ENCODE measurements at regions of chr6 and their contacts with region 1.

Region 1: GRCh38 chr6:151765444-151765886 is 42.0 kb upstream of the ESR1 start:
- DNase-seq: peak in 1 of 2 donors; percentile 70
- ATAC-seq: peak; percentile 30 to 73 (median 48)
- H3K4me3 ChIP-seq: no peak overlapping the region
- H3K27ac ChIP-seq: no peak overlapping the region
- H3K4me1 ChIP-seq: peaks cover 0 to 22% (median 8%) of the 10 kb centered on the region in 9 donors
- H3K27me3 ChIP-seq: no peaks in the 10 kb centered on the region
- CTCF ChIP-seq: peak; percentile 57 to 85 (median 75)

Region 2: DNA sequence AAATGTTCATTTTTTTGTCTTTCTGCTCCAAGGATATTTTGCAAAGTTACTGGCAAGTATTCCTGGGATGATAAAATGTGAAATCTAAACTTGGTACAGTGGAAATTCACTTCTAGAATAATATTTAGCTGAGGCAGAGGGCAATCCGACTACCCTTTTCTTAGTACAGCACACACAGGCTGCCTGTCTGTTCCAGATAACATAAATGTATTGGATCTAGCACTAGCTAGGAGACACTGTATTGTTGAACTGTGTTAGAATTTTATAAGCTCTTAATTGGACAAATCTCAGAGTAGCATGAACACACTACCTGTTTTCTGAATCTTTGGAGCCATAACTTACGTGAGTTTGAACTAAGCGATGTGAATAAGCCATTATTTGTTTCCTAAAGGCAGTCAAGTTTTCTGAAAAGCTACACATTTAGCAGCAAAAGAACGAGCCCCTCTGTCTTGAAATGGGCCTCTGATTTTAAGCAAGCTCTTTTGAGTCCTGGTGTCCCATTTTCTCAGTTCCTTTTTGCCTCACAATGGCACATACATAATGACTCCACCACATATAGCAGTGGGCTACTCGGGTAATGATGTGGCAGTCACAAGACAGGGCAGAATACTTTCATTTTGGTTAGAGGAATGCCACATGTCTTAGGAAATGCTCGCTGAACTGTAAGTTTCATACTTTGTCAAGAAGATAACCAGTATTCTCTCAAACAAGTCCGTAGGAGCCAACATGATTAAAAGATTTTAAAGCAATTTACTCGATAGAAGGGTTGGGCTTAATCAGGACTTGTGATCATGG is 74.5 kb before region 1 on chr6:
- intact Hi-C with region 1: loop called in 1 of 10 experiments (anchors 2 kb)
- DNase-seq: no peak
- ATAC-seq: peak in 7 of 8 donors; percentile 64 to 78 (median 72)
- H3K4me3 ChIP-seq: peak overlapping the region in 9 of 10 donors; percentile 10 to 47 (median 41)
- H3K27ac ChIP-seq: peak overlapping the region; percentile 18 to 82 (median 69)
- H3K4me1 ChIP-seq: peaks cover 0 to 27% (median 0%) of the 10 kb centered on the region in 9 donors
- H3K27me3 ChIP-seq: peaks cover 0 to 2% (median 0%) of the 10 kb centered on the region in 7 donors
- CTCF ChIP-seq: no peak

Region 3: GRCh38 chr6:151807533-151808370 is 42.3 kb after region 1 on chr6 and contains the start of gene ESR1:
- intact Hi-C with region 1: no loop called
- DNase-seq: peak in 1 of 2 donors; percentile 19
- ATAC-seq: peak in 7 of 8 donors; percentile 15 to 53 (median 31)
- H3K4me3 ChIP-seq: peak within 1 kb of the TSS; percentile 16 to 56 (median 47)
- H3K27ac ChIP-seq: no peak within 1 kb of the TSS
- H3K4me1 ChIP-seq: peaks cover 0 to 41% (median 31%) of the 10 kb centered on the region in 9 donors
- H3K27me3 ChIP-seq: peaks cover 0 to 59% (median 33%) of the 10 kb centered on the region in 7 donors
- CTCF ChIP-seq: no peak
- total RNA-seq, gene ESR1: 0.68 to 1.9 (median 1.3) TPM

Region 4: GRCh38 chr6:152110886-152111820 is 345.7 kb after region 1 on chr6:
- intact Hi-C with region 1: loop called in 1 of 10 experiments (anchors 5 kb)
- DNase-seq: peak; percentile 66 to 72
- ATAC-seq: peak; percentile 83 to 97 (median 94)
- H3K4me3 ChIP-seq: no peak overlapping the region
- H3K27ac ChIP-seq: peak overlapping the region; percentile 51 to 81 (median 72)
- H3K4me1 ChIP-seq: peaks cover 7 to 30% (median 25%) of the 10 kb centered on the region in 9 donors
- H3K27me3 ChIP-seq: no peaks in the 10 kb centered on the region
- CTCF ChIP-seq: peak in 2 of 9 donors; percentile 10 to 12

Region 5: DNA sequence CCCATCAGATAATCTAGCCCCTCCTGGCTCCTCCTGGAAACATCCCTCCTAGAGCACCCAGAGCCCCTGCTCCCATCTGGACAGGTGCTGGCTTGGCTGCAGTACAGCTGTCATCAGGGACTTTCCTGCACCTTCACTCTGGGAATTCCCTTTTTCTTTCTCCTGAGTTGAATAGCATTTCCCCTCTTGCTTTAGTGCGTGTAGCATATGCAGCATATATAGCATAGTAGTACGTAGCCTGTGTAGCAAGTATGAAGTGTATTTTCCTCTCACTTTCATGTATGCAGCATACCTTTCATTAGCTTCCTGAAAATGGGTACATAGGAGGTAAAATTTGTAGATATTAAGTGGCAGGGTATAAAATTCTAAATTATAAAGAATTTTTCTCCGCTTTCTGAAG is 394.9 kb after region 1 on chr6:
- intact Hi-C with region 1: no loop called
- DNase-seq: no peak
- ATAC-seq: no peak
- H3K4me3 ChIP-seq: no peak overlapping the region
- H3K27ac ChIP-seq: peak overlapping the region in 1 of 10 donors; percentile 2
- H3K4me1 ChIP-seq: peaks cover 0 to 4% (median 0%) of the 10 kb centered on the region in 9 donors
- H3K27me3 ChIP-seq: no peaks in the 10 kb centered on the region
- CTCF ChIP-seq: no peak